CD14-positive monocyte (primary cell): ENCODE measurements at regions of chr6 and their contacts with region 1.

Region 1: DNA sequence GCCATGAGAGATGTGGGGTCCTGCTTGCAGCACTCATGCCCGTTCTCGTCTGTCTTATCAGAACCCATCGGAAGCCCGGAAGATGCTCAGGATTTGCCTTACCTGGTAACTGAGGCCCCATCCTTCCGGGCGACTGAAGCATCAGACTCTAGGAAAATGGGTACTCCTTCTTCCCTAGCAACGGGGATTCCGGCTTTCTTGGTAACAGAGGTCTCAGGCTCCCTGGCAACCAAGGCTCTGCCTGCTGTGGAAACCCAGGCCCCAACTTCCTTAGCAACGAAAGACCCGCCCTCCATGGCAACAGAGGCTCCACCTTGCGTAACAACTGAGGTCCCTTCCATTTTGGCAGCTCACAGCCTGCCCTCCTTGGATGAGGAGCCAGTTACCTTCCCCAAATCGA is 8.3 kb downstream of the PI16 start:
- DNase-seq: peak; percentile 97 to 99 (median 98)
- H3K4me3 ChIP-seq: no peak overlapping the region
- H3K4me3 Mint-ChIP-seq: peak overlapping the region; percentile 21 to 59
- H3K27ac ChIP-seq: peak overlapping the region in 1 of 2 donors; percentile 51
- H3K27ac Mint-ChIP-seq: peak overlapping the region; percentile 43 to 94 (median 90)
- H3K4me1 ChIP-seq: peaks cover 10 to 16% of the 10 kb centered on the region in 2 donors
- H3K4me1 Mint-ChIP-seq: peaks cover 22% of the 10 kb centered on the region
- H3K27me3 ChIP-seq: peaks cover 0 to 9% of the 10 kb centered on the region in 2 donors
- H3K27me3 Mint-ChIP-seq: peaks cover 19 to 20% (median 19%) of the 10 kb centered on the region in 3 donors
- CTCF ChIP-seq: no peak

Region 2: DNA sequence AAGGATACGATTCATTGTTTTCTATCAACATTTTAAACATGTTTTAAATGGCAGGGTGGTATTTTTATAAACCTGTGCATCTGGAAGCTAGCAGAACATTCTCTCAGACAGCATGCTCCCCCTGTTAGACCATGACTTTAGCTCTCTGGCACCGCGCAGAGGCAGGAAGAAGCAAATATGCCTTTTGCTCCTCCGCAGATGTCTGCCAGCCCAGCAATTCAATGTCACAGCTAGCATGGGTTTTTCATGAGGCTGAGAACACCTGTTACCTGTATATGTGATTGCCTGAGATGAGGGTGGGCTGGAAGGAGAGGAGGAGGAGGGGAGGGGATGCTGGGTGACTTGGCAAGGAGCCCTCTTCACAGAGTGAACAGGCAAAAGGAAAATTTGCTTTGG is 16.5 kb after region 1 on chr6:
- intact Hi-C with region 1: no loop called
- DNase-seq: no peak
- H3K4me3 ChIP-seq: no peak overlapping the region
- H3K4me3 Mint-ChIP-seq: no peak overlapping the region
- H3K27ac ChIP-seq: peak overlapping the region in 1 of 2 donors; percentile 15
- H3K27ac Mint-ChIP-seq: peak overlapping the region in 2 of 7 donors; percentile 19 to 67
- H3K4me1 ChIP-seq: peaks cover 18 to 19% of the 10 kb centered on the region in 2 donors
- H3K4me1 Mint-ChIP-seq: peaks cover 6% of the 10 kb centered on the region
- H3K27me3 ChIP-seq: no peaks in the 10 kb centered on the region
- H3K27me3 Mint-ChIP-seq: no peaks in the 10 kb centered on the region
- CTCF ChIP-seq: no peak

Region 3: GRCh38 chr6:37239950-37240713 is 277.3 kb after region 1 on chr6:
- intact Hi-C with region 1: loop called in 1 of 2 experiments (anchors 5 kb)
- DNase-seq: peak; percentile 87 to 92 (median 89)
- H3K4me3 ChIP-seq: no peak overlapping the region
- H3K4me3 Mint-ChIP-seq: no peak overlapping the region
- H3K27ac ChIP-seq: peak overlapping the region; percentile 64 to 75
- H3K27ac Mint-ChIP-seq: peak overlapping the region; percentile 86 to 97 (median 92)
- H3K4me1 ChIP-seq: peaks cover 23 to 26% of the 10 kb centered on the region in 2 donors
- H3K4me1 Mint-ChIP-seq: peaks cover 26% of the 10 kb centered on the region
- H3K27me3 ChIP-seq: no peaks in the 10 kb centered on the region
- H3K27me3 Mint-ChIP-seq: no peaks in the 10 kb centered on the region
- CTCF ChIP-seq: no peak